Lower leg skin (tissue), 4 donors: ENCODE measurements at regions of chr6 and their contacts with region 1.

Region 1: DNA sequence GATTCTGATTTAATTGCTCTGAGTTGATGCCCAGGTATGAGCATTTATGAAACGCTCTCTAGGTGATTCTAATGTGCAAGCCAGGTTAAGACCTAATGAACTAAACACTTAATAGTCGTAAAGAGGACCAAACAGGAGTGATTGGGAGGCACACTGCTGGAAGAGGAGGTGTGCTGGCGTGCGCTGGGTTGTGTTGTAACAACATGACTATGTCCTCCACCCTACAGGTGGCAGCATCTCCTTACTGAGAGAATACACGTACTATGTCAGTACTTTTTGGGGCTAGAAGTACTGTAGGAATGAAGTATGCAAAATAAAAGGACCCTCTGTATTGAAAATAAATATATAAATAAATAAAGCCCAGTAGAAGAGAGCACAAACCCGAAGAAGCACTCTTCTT is 11.9 kb downstream of the C6orf89 start:
- DNase-seq: no peak
- H3K4me3 ChIP-seq: no peak overlapping the region
- CTCF ChIP-seq: no peak
- POLR2A ChIP-seq: no peak

Region 2: GRCh38 chr6:37207903-37208456 is 310.4 kb after region 1 on chr6:
- intact Hi-C with region 1: loop called (anchors 10 kb)
- DNase-seq: peak; percentile 78 to 95
- H3K4me3 ChIP-seq: no peak overlapping the region
- CTCF ChIP-seq: peak in 1 of 3 donors; percentile 29
- POLR2A ChIP-seq: no peak